ENCODE measurements at regions of chr1 and their contacts with region 1.

Region 1: GRCh38 chr1:167220537-167221125 is at the start of gene POU2F1:
- DNase-seq: peak; percentile 99
- H3K4me3 ChIP-seq: peak within 1 kb of the TSS; percentile 85 to 96 (median 92)
- H3K27ac ChIP-seq: peak within 1 kb of the TSS; percentile 94 to 99 (median 98)
- H3K4me1 ChIP-seq: peaks cover 0 to 44% (median 30%) of the 10 kb centered on the region in 4 donors
- H3K27me3 ChIP-seq: no peaks in the 10 kb centered on the region
- CTCF ChIP-seq: peak in 3 of 4 experiments; percentile 18 to 71 (median 48)
- EP300 ChIP-seq: no peak
- POLR2A ChIP-seq: peak; percentile 44 to 51
- total RNA-seq, gene POU2F1: 15.0 to 35.5 (median 20.3) TPM

Region 2: GRCh38 chr1:166796620-166797236 is 423.9 kb before region 1 on chr1:
- intact Hi-C with region 1: no loop called
- DNase-seq: no peak
- H3K4me3 ChIP-seq: no peak overlapping the region
- H3K27ac ChIP-seq: no peak overlapping the region
- H3K4me1 ChIP-seq: no peaks in the 10 kb centered on the region
- H3K27me3 ChIP-seq: peaks cover 0 to 7% (median 0%) of the 10 kb centered on the region in 3 donors
- CTCF ChIP-seq: no peak
- EP300 ChIP-seq: no peak
- POLR2A ChIP-seq: no peak

Region 3: GRCh38 chr1:166844791-166845190 is 375.8 kb before region 1 on chr1:
- intact Hi-C with region 1: loop called (anchors 5 kb)
- DNase-seq: no peak
- H3K4me3 ChIP-seq: no peak overlapping the region
- H3K27ac ChIP-seq: peak overlapping the region; percentile 38 to 71 (median 62)
- H3K4me1 ChIP-seq: peaks cover 0 to 59% (median 55%) of the 10 kb centered on the region in 4 donors
- H3K27me3 ChIP-seq: no peaks in the 10 kb centered on the region
- CTCF ChIP-seq: no peak
- EP300 ChIP-seq: no peak
- POLR2A ChIP-seq: no peak

Region 4: GRCh38 chr1:167066333-167067122 is 154.1 kb before region 1 on chr1:
- intact Hi-C with region 1: loop called (anchors 1 kb)
- DNase-seq: peak; percentile 79
- H3K4me3 ChIP-seq: peak overlapping the region in 2 of 4 donors; percentile 21 to 29
- H3K27ac ChIP-seq: no peak overlapping the region
- H3K4me1 ChIP-seq: peaks cover 0 to 7% (median 5%) of the 10 kb centered on the region in 4 donors
- H3K27me3 ChIP-seq: no peaks in the 10 kb centered on the region
- CTCF ChIP-seq: peak; percentile 76 to 96 (median 83)
- EP300 ChIP-seq: no peak
- POLR2A ChIP-seq: no peak

Region 5: DNA sequence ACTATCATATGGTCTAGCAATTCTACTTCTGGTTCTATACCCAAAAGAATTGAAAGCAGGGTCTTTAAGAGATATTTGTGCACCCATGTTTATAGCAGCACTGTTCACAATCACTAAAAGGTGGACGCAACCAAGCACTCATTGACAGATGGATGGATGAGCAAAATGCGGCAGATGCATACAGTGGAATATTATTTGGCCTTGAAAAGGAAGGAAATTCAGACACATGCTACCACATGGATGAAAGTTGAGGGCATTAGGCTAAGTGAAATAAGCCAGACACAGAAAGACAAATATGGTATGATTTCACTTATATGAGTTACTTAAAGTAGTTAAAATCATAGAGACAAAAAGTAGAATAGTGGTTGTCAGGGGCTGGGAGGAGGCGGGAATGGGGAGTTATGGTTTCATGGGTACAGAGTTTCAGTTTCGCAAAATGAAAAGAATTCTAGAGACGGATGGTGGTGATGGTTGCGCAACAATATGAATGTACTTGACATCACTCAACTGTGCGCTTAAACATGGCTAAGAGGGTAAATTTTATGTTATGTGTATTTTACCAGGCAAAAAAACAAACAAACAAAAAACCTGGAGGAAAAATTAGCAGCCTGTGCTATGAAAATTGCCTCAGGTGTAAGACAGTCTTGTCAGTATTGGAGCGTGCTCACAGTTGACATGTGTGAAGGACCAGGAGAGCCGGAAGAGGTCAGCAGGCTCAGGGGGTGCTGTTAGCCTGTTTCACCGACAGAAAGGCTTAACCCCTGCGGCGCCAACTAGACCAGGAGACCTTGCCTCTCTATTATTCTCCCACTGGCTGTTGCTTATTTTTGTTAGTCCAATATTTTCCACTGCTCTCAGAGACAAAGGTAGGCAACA is 271.2 kb after region 1 on chr1:
- intact Hi-C with region 1: no loop called
- DNase-seq: peak; percentile 13
- H3K4me3 ChIP-seq: no peak overlapping the region
- H3K27ac ChIP-seq: no peak overlapping the region
- H3K4me1 ChIP-seq: no peaks in the 10 kb centered on the region
- H3K27me3 ChIP-seq: peaks cover 0 to 9% (median 0%) of the 10 kb centered on the region in 3 donors
- CTCF ChIP-seq: no peak
- EP300 ChIP-seq: no peak
- POLR2A ChIP-seq: no peak

Region 6: GRCh38 chr1:167553136-167554027 is 332.8 kb after region 1 on chr1 and contains the start of gene CREG1:
- intact Hi-C with region 1: loop called (anchors 2 kb)
- DNase-seq: peak; percentile 97
- H3K4me3 ChIP-seq: peak within 1 kb of the TSS; percentile 59 to 97 (median 84)
- H3K27ac ChIP-seq: peak within 1 kb of the TSS; percentile 78 to 87 (median 86)
- H3K4me1 ChIP-seq: peaks cover 0 to 41% (median 31%) of the 10 kb centered on the region in 4 donors
- H3K27me3 ChIP-seq: no peaks in the 10 kb centered on the region
- CTCF ChIP-seq: no peak
- EP300 ChIP-seq: no peak
- POLR2A ChIP-seq: peak; percentile 28 to 51
- total RNA-seq, gene CREG1: 139 to 180 (median 168) TPM

Region 7: DNA sequence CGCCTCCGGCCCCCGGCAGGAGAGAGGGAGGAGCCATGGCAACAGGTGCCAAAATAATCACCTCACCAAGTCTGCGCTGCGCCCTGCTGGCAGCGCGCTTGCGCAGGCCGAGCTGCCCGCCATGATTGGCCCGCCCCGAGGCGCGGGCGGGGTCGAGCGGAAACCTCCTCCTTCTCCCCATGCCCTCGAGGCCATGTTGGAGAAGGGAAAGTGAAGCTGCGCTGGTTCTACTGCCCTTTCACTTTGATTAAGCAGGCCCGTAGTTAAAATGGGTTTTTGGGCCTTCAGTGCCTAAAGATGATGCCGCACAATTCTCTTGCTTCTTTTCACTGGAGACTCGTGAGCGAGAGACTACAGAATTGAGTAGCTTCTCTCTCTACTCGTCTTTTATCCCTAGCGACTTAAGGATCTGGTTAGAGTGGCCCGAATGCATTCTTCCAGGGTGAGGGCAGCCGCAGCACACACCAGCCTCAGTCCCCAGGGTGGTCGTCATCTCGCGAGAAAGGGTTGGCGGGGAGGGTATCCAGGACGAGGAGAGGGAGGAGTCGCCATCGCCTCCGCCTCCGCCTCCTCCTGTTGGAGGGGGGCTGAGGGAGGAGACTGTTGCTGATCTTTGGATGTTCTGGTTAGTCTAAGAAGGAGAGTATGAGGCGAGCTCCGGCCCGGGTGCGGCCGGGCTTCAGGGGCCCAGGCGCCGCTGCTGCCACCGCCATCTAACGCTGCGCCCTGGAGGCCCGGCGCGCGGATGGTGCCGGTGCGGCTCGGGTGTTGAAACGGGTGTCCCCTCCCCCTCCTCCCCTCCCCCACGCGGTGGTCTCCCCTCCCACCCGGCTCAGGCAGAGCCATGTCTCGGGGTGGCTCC is 715.7 kb after region 1 on chr1 and contains the start of gene DCAF6:
- intact Hi-C with region 1: loop called (anchors 5 kb)
- DNase-seq: peak; percentile 98
- H3K4me3 ChIP-seq: peak within 1 kb of the TSS; percentile 70 to 99 (median 86)
- H3K27ac ChIP-seq: peak within 1 kb of the TSS; percentile 95 to 99 (median 96)
- H3K4me1 ChIP-seq: peaks cover 0 to 54% (median 43%) of the 10 kb centered on the region in 4 donors
- H3K27me3 ChIP-seq: no peaks in the 10 kb centered on the region
- CTCF ChIP-seq: no peak
- EP300 ChIP-seq: peak in 1 of 4 donors; percentile 18
- POLR2A ChIP-seq: peak; percentile 76 to 90
- total RNA-seq, gene DCAF6: 79.6 to 102 (median 86.2) TPM